Lower leg skin (tissue), 4 donors: ENCODE measurements at regions of chr20 and their contacts with region 1.

Region 1: DNA sequence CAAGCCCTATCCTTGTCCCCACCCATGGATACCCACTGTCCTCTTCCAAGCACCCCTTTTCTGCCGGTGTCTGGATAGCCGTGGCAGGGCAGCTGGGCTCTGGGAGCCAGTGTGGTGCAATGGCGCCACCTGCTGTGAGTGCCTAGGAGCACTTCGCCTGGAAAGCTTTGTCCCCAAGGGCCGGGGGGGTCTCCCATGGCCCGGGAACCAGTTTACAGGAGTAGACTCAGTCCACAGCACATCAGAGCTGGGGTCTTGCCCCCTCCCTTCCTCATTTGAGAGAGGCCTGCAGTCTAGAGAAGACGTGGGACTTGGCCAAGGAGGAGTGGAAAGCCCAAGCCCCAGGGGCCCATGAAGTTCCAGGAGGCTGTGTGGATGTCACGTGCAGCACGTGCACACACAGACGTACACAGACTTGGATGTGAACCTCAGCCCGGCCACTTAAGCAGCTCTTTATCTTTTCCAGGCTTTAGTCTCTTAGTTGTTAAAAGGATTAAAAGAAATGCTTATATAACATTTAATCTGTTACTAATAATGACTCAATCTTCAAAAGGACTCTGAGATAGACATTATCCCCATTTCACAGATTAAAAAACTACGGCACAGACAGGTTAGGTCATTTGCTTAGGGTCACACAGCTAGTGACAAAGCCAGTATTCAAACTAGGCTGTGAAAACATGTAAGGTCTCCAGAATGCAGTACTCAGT is 40.9 kb upstream of the CDH22 start:
- DNase-seq: peak in 1 of 2 donors; percentile 91
- H3K4me3 ChIP-seq: no peak overlapping the region
- CTCF ChIP-seq: no peak
- POLR2A ChIP-seq: no peak

Region 2: GRCh38 chr20:46132705-46133120 is 216.5 kb before region 1 on chr20:
- intact Hi-C with region 1: loop called (anchors 10 kb)
- DNase-seq: peak; percentile 34 to 93
- H3K4me3 ChIP-seq: no peak overlapping the region
- CTCF ChIP-seq: peak in 1 of 3 donors; percentile 35
- POLR2A ChIP-seq: no peak